ENCODE measurements at regions of chr9 and their contacts with region 1.

Region 1: DNA sequence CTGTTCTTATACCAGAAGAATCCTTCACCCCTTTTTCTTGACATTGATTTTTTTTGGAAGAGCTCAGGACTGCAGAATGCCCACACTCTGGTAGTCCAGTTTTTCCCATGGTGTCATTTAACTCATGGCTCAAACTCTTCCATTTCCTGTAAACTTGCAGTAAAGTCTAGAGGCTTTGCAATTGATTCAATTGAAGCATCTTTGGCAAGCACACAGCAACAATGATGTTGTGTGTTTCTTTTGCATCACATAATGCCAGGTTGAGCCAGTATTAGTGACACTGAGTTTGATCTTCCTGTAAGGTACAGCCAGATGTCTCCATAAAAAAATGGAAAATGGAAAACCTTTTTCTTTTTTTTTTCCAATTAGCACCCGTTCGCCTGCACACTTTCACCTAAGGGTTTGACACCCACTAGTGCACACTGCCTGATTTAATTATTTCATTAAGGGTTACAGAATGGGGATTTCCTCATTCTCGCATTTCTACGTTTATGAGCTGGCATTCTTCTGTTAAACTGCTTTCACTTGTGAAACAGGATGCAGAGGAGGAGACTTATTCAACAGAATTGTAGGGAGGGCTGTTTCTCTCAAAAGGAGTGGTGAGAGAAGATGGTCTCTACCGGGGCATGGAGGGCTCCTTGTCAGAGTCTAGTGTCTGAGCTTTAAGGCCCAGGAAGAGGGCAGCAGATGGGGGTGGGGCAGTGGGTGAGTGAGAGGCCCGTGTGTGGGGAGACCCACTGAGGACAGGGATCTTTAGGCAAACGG is 2.3 kb upstream of the S1PR3 start:
- DNase-seq: peak; percentile 38
- H3K4me3 Mint-ChIP-seq: peak overlapping the region; percentile 8
- H3K27ac Mint-ChIP-seq: peak overlapping the region; percentile 32
- H3K4me1 Mint-ChIP-seq: peaks cover 50% of the 10 kb centered on the region
- H3K27me3 Mint-ChIP-seq: peaks cover 30% of the 10 kb centered on the region

Region 2: GRCh38 chr9:88303721-88304451 is 685.1 kb before region 1 on chr9:
- CTCF ChIA-PET with region 1: no interaction called
- intact Hi-C with region 1: loop called (anchors 2 kb)
- DNase-seq: peak; percentile 75
- H3K4me3 Mint-ChIP-seq: no peak overlapping the region
- H3K27ac Mint-ChIP-seq: no peak overlapping the region
- H3K4me1 Mint-ChIP-seq: peaks cover 23% of the 10 kb centered on the region
- H3K27me3 Mint-ChIP-seq: peaks cover 8% of the 10 kb centered on the region

Region 3: DNA sequence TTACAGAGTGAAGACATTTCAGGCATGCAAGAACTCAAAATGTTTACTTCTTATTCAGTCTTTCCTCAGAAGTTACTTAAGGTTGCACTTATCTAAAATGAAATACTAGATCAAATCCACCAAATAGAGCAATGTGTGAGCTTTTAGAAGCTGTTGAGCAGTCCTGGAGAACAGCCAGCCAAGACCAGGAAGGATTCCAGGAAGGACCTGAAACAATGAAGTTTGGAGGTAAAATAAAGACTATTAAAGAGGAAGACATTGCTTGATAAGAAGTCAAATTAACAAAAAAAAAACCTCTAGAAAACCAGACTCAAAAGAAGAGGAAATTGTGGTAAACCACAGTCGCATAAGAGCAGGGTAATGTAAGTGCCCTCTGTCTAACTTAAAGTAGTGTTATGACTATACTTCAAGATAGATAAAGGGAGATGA is 153.9 kb before region 1 on chr9:
- CTCF ChIA-PET with region 1: no interaction called
- intact Hi-C with region 1: loop called (anchors 1 kb)
- DNase-seq: no peak
- H3K4me3 Mint-ChIP-seq: no peak overlapping the region
- H3K27ac Mint-ChIP-seq: no peak overlapping the region
- H3K4me1 Mint-ChIP-seq: peaks cover 24% of the 10 kb centered on the region
- H3K27me3 Mint-ChIP-seq: peaks cover 71% of the 10 kb centered on the region

Region 4: GRCh38 chr9:88936668-88937067 is 52.3 kb before region 1 on chr9:
- CTCF ChIA-PET with region 1: no interaction called
- intact Hi-C with region 1: loop called (anchors 5 kb)
- DNase-seq: no peak
- H3K4me3 Mint-ChIP-seq: no peak overlapping the region
- H3K27ac Mint-ChIP-seq: no peak overlapping the region
- H3K4me1 Mint-ChIP-seq: no peaks in the 10 kb centered on the region
- H3K27me3 Mint-ChIP-seq: peaks cover 10% of the 10 kb centered on the region

Region 5: DNA sequence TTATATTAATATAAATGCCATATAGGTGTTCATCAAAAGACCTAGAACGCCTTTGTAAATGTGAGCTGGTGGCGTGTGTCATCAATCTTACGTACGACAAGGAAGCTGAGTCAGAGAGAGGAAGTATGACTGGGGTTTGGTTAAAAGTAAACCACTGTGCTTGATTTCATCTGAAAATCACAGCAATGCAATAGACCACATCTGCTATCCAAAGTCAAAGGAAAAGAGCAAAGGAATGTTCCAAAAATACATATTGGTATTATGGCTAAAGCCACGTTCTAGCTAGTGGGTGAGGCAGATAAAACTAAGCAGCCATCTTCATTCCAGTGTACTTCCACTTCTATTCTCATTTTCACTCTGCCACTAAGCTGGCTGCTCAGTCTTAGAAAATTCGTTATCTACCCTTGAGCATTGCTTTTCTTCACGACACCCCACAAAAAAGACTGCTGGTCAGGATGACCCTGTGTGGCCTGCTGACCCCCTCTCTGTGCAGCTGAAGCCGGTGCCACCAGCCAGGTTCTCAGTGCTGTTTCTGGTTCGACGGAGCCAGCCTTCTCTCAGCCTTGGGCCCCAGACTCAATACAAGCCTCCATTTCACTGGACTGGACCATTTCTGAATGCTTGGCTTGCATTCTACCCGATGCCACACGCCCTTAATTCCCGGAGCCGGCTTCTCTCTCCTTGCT is 165.8 kb after region 1 on chr9:
- CTCF ChIA-PET with region 1: no interaction called
- intact Hi-C with region 1: loop called (anchors 2 kb)
- DNase-seq: peak; percentile 67
- H3K4me3 Mint-ChIP-seq: no peak overlapping the region
- H3K27ac Mint-ChIP-seq: no peak overlapping the region
- H3K4me1 Mint-ChIP-seq: peaks cover 24% of the 10 kb centered on the region
- H3K27me3 Mint-ChIP-seq: peaks cover 37% of the 10 kb centered on the region

Measured in activated naive CD4-positive, alpha-beta T cell treated with anti-CD3 and anti-CD28 coated beads for 36 hours (primary cell).